ENCODE measurements at regions of chr6 and their contacts with region 1.

Region 1: DNA sequence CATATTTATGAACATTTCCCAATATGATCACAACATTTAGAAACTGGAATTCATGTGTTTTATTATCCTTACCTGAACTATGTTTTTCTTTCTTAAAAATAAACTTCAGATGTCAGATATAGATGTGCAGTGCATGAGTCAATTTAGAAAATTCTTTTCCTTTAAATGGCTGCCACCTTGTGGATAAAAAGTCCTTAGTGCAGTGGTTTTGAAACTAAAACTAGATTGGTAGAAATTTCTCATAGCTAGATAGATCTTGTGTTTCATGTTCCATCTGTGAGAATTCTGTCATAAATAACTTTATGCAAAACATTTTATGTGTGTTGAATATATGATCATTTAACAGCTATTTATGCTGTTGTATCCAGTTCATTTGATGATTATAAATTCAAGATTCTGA is 134.9 kb downstream of the KLHL32 start:
- DNase-seq: no peak
- H3K4me3 ChIP-seq: no peak overlapping the region
- H3K27ac ChIP-seq: no peak overlapping the region
- H3K27me3 ChIP-seq: no peaks in the 10 kb centered on the region
- CTCF ChIP-seq: peak; percentile 57

Region 2: GRCh38 chr6:96626759-96627364 is 432.6 kb before region 1 on chr6:
- CTCF ChIA-PET with region 1: interaction called, 96 read pairs
- POLR2A ChIA-PET with region 1: no interaction called
- DNase-seq: peak; percentile 1
- H3K4me3 ChIP-seq: no peak overlapping the region
- H3K27ac ChIP-seq: no peak overlapping the region
- H3K27me3 ChIP-seq: no peaks in the 10 kb centered on the region
- CTCF ChIP-seq: peak; percentile 38

Region 3: GRCh38 chr6:96907498-96907897 is 152.0 kb before region 1 on chr6:
- CTCF ChIA-PET with region 1: interaction called, 14 read pairs
- POLR2A ChIA-PET with region 1: no interaction called
- DNase-seq: no peak
- H3K4me3 ChIP-seq: no peak overlapping the region
- H3K27ac ChIP-seq: no peak overlapping the region
- H3K27me3 ChIP-seq: peaks cover 10% of the 10 kb centered on the region
- CTCF ChIP-seq: no peak